MCF 10A (cell line): ENCODE measurements at regions of chr7 and their contacts with region 1.

Region 1: DNA sequence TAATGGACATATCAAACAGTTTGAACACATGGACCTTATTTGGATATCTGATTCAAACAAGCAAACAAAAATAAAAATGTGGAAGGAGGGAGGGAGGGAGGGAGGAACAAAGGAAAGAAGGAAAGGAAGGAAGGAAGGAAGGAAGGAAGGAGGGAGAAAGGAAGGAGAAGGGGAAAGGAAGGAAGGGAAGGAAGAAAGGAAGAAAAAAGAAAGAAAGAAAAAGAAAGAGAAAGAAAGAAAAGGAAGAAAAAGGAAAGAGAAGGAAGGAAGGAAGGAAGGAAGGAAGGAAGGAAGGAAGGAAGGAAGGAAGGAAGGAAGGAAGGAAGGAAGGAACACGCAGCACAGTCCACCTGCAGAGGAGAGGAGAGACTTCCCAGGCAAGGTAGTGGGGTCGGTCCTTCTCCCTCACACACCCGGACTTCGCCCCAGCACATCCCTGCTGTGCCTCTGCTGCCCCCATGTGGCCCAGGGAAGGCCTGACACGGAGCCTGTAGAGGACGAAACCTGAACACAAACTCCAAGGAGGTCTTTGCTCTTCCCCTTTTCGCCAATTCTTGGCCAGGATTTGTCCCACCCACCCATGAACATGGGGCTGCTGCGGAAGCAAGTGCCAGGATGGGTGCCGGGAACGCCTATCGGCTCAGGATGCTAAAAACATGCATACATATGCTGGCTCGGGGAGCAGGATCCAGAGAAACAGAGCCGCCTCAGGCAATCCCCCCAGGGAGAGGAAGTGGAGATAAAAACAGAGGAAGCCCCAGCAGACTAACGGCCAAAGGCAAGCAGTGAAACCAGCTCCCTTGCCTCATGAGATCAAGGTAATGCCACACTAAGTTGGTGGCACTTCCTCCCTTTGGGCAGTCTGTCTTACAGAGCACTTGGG is 52.3 kb upstream of the DGKI start:
- DNase-seq: peak; percentile 76
- H3K4me3 Mint-ChIP-seq: no peak overlapping the region
- H3K27ac Mint-ChIP-seq: peak overlapping the region; percentile 81
- H3K4me1 Mint-ChIP-seq: peaks cover 10% of the 10 kb centered on the region
- H3K27me3 Mint-ChIP-seq: no peaks in the 10 kb centered on the region
- CTCF ChIP-seq: peak; percentile 92

Region 2: GRCh38 chr7:137606061-137606674 is 292.9 kb before region 1 on chr7:
- CTCF ChIA-PET with region 1: interaction called, 34 read pairs
- POLR2A ChIA-PET with region 1: interaction called, 6 read pairs
- intact Hi-C with region 1: loop called (anchors 2 kb)
- DNase-seq: peak; percentile 47
- H3K4me3 Mint-ChIP-seq: no peak overlapping the region
- H3K27ac Mint-ChIP-seq: no peak overlapping the region
- H3K4me1 Mint-ChIP-seq: no peaks in the 10 kb centered on the region
- H3K27me3 Mint-ChIP-seq: peaks cover 46% of the 10 kb centered on the region
- CTCF ChIP-seq: peak; percentile 35

Region 3: DNA sequence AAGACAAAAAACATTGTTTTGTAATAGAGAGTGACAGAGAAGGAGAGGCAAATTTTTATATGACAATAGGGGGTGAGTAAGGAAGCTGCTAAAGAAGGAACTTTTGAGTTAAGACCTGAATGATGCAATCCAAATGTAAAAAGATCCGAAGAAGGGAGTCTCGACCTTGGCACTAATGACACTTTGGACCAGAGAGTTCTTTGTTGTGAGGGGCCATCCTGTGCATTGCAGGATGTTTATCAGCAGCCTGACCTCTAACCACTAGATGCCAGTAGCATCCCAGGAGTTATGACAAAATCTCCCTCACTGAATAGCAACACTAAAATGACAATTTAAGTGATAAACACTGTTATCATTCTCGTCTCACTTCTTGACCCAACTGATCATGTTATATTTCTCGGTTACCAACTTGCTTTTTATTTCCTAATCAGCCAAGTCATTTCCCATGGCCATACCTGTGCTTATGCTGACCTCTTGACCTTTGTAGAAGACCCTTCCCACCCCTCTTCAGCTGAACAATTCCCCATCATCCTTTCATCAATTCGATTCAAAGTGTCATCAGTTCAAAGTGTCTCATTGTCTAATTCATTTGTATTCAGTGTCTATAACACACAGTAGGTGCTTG is 82.3 kb before region 1 on chr7:
- CTCF ChIA-PET with region 1: interaction called, 4 read pairs
- POLR2A ChIA-PET with region 1: no interaction called
- intact Hi-C with region 1: loop called (anchors 1 kb)
- DNase-seq: peak; percentile 17
- H3K4me3 Mint-ChIP-seq: no peak overlapping the region
- H3K27ac Mint-ChIP-seq: no peak overlapping the region
- H3K4me1 Mint-ChIP-seq: no peaks in the 10 kb centered on the region
- H3K27me3 Mint-ChIP-seq: no peaks in the 10 kb centered on the region
- CTCF ChIP-seq: no peak

Region 4: GRCh38 chr7:137916980-137917645 is 18.0 kb after region 1 on chr7:
- CTCF ChIA-PET with region 1: interaction called, 29 read pairs
- POLR2A ChIA-PET with region 1: no interaction called
- intact Hi-C with region 1: no loop called
- DNase-seq: no peak
- H3K4me3 Mint-ChIP-seq: no peak overlapping the region
- H3K27ac Mint-ChIP-seq: no peak overlapping the region
- H3K4me1 Mint-ChIP-seq: peaks cover 4% of the 10 kb centered on the region
- H3K27me3 Mint-ChIP-seq: no peaks in the 10 kb centered on the region
- CTCF ChIP-seq: no peak

Region 5: GRCh38 chr7:137992550-137993394 is 93.7 kb after region 1 on chr7:
- CTCF ChIA-PET with region 1: interaction called, 563 read pairs
- POLR2A ChIA-PET with region 1: no interaction called
- intact Hi-C with region 1: no loop called
- DNase-seq: peak; percentile 88
- H3K4me3 Mint-ChIP-seq: peak overlapping the region; percentile 30
- H3K27ac Mint-ChIP-seq: peak overlapping the region; percentile 87
- H3K4me1 Mint-ChIP-seq: peaks cover 20% of the 10 kb centered on the region
- H3K27me3 Mint-ChIP-seq: no peaks in the 10 kb centered on the region
- CTCF ChIP-seq: no peak

Region 6: GRCh38 chr7:138008547-138009349 is 109.7 kb after region 1 on chr7:
- CTCF ChIA-PET with region 1: interaction called, 563 read pairs
- POLR2A ChIA-PET with region 1: interaction called, 7 read pairs
- intact Hi-C with region 1: loop called (anchors 1 kb)
- DNase-seq: peak; percentile 78
- H3K4me3 Mint-ChIP-seq: no peak overlapping the region
- H3K27ac Mint-ChIP-seq: no peak overlapping the region
- H3K4me1 Mint-ChIP-seq: no peaks in the 10 kb centered on the region
- H3K27me3 Mint-ChIP-seq: no peaks in the 10 kb centered on the region
- CTCF ChIP-seq: peak; percentile 90

Region 7: DNA sequence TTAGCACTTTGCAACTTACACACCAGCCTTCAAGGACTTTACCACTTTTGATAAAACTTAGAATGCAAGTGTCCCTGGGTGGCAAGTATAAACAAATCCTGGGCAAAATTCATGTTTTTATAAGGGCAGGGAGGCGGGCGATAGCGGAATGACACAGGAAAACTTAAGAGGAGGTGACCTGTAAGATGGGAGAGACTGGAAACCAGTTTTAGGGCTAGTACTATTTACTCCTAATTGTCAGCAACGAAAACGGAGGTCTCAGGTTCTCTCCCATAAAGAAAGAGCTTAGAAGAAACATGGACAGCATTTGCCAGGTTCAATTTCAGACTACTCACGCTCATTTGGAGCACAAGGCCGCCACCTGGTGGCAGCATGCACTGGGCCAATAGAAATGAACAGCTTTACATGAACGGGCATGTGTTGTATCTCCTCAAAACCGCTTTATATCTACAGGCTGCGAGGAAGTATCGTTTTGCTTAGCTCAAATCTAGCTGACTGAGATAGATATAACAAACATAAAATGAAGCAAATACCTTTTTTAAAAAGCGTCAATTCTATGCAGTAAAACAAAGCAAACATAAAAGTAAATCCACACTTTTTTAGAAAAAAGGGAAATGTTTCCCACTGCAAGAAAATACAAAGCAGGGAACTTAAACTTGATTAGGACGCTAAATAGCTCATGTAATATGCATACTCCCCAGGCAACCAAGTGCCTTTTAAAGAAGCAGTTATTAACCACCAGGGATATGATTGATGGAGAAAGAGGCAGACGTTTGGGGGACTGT is 839.7 kb after region 1 on chr7:
- CTCF ChIA-PET with region 1: interaction called, 20 read pairs
- POLR2A ChIA-PET with region 1: no interaction called
- intact Hi-C with region 1: loop called (anchors 1 kb)
- DNase-seq: peak; percentile 84
- H3K4me3 Mint-ChIP-seq: no peak overlapping the region
- H3K27ac Mint-ChIP-seq: peak overlapping the region; percentile 25
- H3K4me1 Mint-ChIP-seq: peaks cover 9% of the 10 kb centered on the region
- H3K27me3 Mint-ChIP-seq: no peaks in the 10 kb centered on the region
- CTCF ChIP-seq: peak; percentile 88